Spleen (tissue), 13 donors: ENCODE measurements at regions of chr9 and their contacts with region 1.

Region 1: GRCh38 chr9:126398403-126399058 is 71.9 kb downstream of the MVB12B start:
- DNase-seq: peak; percentile 96
- H3K4me3 ChIP-seq: no peak overlapping the region
- H3K27ac ChIP-seq: peak overlapping the region in 4 of 8 donors; percentile 47 to 86 (median 67)
- H3K4me1 ChIP-seq: peaks cover 3 to 71% (median 50%) of the 10 kb centered on the region in 6 donors
- H3K27me3 ChIP-seq: no peaks in the 10 kb centered on the region
- CTCF ChIP-seq: peak; percentile 88 to 99 (median 97)
- POLR2A ChIP-seq: no peak

Region 2: GRCh38 chr9:126317513-126317912 is 81.0 kb before region 1 on chr9:
- intact Hi-C with region 1: loop called (anchors 5 kb)
- DNase-seq: no peak
- H3K4me3 ChIP-seq: no peak overlapping the region
- H3K27ac ChIP-seq: no peak overlapping the region
- H3K4me1 ChIP-seq: peaks cover 0 to 28% (median 4%) of the 10 kb centered on the region in 6 donors
- H3K27me3 ChIP-seq: no peaks in the 10 kb centered on the region
- CTCF ChIP-seq: peak in 9 of 11 experiments; percentile 37 to 63 (median 54)
- POLR2A ChIP-seq: no peak

Region 3: GRCh38 chr9:126490871-126491567 is 92.5 kb after region 1 on chr9:
- intact Hi-C with region 1: loop called (anchors 5 kb)
- DNase-seq: peak; percentile 61
- H3K4me3 ChIP-seq: no peak overlapping the region
- H3K27ac ChIP-seq: no peak overlapping the region
- H3K4me1 ChIP-seq: peaks cover 0 to 43% (median 32%) of the 10 kb centered on the region in 6 donors
- H3K27me3 ChIP-seq: peaks cover 0 to 7% (median 0%) of the 10 kb centered on the region in 7 donors
- CTCF ChIP-seq: peak; percentile 77 to 96 (median 92)
- POLR2A ChIP-seq: no peak